PC-9 (cell line): ENCODE measurements at regions of chr15 and their contacts with region 1.

Region 1: DNA sequence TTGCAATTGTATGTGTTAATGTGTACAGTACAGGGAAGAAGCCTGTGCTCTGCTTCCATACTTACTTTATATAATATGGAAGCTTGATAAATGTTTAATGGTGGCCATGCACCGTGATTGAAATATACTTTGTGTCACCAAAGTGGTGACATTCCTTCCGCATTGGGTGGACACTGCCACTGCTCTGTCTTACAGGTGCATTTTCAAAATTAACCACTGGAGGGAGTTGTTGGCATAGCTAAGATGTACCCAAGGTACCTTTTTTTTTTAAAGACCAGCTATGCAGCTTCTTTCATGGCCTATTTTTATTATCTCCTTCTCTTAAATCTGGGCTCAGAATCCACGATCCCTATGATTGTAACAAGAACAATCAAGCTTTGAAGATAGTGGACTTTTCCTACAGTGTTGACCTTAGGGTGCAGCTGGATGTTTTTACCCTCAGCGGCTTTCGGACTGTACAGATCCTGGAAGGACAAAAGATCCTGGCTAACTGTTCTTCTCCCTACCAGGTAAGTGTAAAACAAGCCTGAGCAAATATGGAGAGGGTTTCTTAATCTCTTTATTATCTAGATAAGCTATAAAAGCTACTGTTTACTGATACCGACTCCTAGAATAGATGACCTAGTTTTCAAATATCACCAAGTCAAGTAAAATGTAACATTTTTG is 21.6 kb upstream of the PAK6 start:
- DNase-seq: peak; percentile 55 to 64
- H3K4me3 ChIP-seq: no peak overlapping the region
- H3K27ac ChIP-seq: no peak overlapping the region
- H3K4me1 ChIP-seq: no peaks in the 10 kb centered on the region
- H3K27me3 ChIP-seq: no peaks in the 10 kb centered on the region
- CTCF ChIP-seq: peak; percentile 85

Region 2: DNA sequence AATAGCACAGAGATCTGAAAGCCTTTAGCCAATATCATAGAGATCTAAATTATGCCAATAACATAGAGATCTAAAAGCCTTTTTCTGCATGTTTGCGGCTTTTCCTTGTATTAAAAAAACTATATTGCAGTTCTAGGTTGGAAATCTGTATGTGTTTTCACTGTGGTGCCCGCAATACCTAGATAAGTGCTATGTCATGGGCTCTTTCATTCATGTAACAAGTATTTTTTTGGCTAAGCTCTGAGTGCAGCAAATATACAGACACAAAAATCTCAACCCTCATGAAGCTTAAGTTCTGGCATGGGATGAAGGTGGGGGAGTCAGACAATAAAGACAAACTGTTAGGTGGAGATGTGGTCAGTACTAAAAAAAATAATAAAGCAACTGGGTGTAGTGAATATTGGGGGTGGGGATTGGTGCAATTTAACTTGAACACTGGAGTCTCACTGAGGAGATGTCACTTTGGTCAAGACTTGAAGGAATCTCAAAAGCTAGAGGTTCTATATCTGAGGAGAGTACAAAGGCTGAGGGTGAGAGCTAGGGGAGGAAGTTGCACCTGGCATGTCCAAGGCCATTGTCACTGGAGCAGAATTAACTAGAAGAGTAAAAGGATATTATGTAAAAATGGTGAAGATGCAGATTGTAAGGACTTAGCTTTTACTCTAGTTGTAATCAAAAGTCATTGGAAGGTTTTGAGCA is 55.5 kb before region 1 on chr15:
- CTCF ChIA-PET with region 1: no interaction called
- POLR2A ChIA-PET with region 1: no interaction called
- intact Hi-C with region 1: no loop called
- DNase-seq: no peak
- H3K4me3 ChIP-seq: peak overlapping the region; percentile 67
- H3K27ac ChIP-seq: no peak overlapping the region
- H3K4me1 ChIP-seq: peaks cover 24% of the 10 kb centered on the region
- H3K27me3 ChIP-seq: no peaks in the 10 kb centered on the region
- CTCF ChIP-seq: no peak

Region 3: DNA sequence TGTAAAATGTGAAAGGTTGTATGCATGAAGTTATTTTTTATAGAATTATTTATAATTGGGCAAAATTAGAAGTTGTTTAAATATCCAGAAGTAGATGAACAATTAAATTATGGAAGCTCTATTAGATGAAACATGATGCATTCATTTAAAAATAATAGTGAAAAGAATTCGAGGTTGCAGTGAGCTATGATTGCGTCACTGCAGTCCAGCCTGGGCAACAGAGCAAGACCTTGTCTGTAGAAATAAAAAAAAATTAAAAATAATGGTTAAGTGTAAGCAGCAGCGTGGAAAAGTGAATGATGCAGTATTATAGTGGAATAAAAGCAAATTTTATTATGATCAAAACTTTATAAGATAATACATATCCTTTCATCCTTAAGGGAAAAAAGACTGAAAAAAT is 42.1 kb before region 1 on chr15:
- CTCF ChIA-PET with region 1: no interaction called
- POLR2A ChIA-PET with region 1: interaction called, 16 read pairs
- intact Hi-C with region 1: no loop called
- DNase-seq: no peak
- H3K4me3 ChIP-seq: no peak overlapping the region
- H3K27ac ChIP-seq: no peak overlapping the region
- H3K4me1 ChIP-seq: no peaks in the 10 kb centered on the region
- H3K27me3 ChIP-seq: no peaks in the 10 kb centered on the region
- CTCF ChIP-seq: no peak